WTC11 (cell line): ENCODE measurements at regions of chr10 and their contacts with region 1.

Region 1: DNA sequence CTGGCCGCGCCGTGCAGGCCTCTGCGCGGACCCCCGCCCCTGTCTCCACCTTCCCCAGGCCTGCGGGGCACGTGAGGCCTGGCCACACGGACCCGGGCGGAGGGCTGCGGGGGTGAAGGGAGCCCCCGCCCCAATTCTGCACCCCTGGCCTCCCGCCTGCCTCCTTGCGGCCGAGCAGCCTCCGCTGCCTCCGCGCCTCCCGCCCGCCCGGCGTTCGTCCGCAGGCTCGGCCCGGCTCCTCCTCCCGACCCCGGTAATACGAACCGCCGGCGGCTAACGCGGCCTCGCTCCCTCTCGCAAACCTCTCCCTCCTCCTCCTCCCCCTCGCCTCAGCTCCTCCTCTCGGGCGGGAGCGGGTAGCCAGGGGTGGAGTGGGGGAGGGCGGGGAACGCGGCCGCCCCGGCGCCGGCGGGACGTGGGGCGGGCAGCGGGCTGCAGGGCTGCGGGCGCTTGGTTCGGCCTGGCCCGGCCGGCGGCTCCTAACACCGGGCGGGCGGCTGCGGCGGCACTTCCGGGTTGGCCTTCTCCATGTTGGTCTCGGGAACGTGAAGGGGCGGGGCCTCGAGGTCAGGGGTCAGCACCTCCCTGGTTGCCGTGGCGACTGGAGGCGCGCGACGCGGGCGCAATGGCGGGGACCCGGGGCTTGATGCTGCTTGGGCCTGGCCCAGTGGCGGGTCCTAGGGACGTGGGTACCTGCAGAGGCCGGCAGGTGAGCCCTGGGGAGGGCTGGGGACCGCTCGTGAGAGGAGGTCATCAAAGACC is at the start of gene RAB11FIP2:
- DNase-seq: peak; percentile 96
- ATAC-seq: peak; percentile 87
- H3K4me3 Mint-ChIP-seq: peak within 1 kb of the TSS; percentile 89
- H3K27ac Mint-ChIP-seq: peak within 1 kb of the TSS; percentile 88
- H3K4me1 Mint-ChIP-seq: peaks cover 32% of the 10 kb centered on the region
- H3K27me3 Mint-ChIP-seq: no peaks in the 10 kb centered on the region
- CTCF ChIP-seq: no peak
- total RNA-seq, gene RAB11FIP2: 11.2 to 12.2 TPM (median 11.6 TPM) in 3 replicates

Region 2: DNA sequence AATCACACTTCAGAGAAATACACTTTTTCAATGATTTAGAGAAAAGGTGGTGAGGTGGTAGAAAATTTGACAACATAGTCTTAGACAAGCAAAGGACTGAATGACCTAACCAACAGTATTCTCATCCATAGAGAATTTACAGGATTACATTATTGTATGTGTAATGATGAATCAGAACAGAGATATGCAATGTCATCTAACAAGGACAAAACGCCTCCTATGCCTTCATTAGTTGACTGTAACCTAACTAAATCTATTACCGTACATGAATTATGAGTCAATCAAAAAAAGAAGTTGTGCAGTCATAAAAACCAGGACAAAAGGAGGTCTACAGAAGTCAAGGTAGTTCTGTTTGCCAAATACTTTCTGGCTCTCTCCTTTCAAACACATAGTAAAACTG is 66.4 kb before region 1 on chr10:
- CTCF ChIA-PET with region 1: no interaction called
- POLR2A ChIA-PET with region 1: no interaction called
- DNase-seq: no peak
- ATAC-seq: no peak
- H3K4me3 Mint-ChIP-seq: no peak overlapping the region
- H3K27ac Mint-ChIP-seq: no peak overlapping the region
- H3K4me1 Mint-ChIP-seq: peaks cover 8% of the 10 kb centered on the region
- H3K27me3 Mint-ChIP-seq: no peaks in the 10 kb centered on the region; the same call in 1 of the 2 replicates
- CTCF ChIP-seq: no peak

Region 3: GRCh38 chr10:118003126-118003525 is 43.5 kb before region 1 on chr10:
- CTCF ChIA-PET with region 1: no interaction called
- POLR2A ChIA-PET with region 1: interaction called, 11 read pairs
- DNase-seq: no peak
- ATAC-seq: no peak
- H3K4me3 Mint-ChIP-seq: no peak overlapping the region
- H3K27ac Mint-ChIP-seq: no peak overlapping the region
- H3K4me1 Mint-ChIP-seq: no peaks in the 10 kb centered on the region
- H3K27me3 Mint-ChIP-seq: no peaks in the 10 kb centered on the region
- CTCF ChIP-seq: no peak